Activated CD4-positive, alpha-beta T cell treated with anti-CD3 and anti-CD28 coated beads, Interleukin-2, amount 10 ng/mL, durations not matched to agents 7 days and 5 days (primary cell): ENCODE measurements at regions of chr3 and their contacts with region 1.

Region 1: GRCh38 chr3:137013955-137014688 is 56.3 kb downstream of the IL20RB start:
- DNase-seq: peak; percentile 85
- H3K4me3 Mint-ChIP-seq: peak overlapping the region; percentile 52
- H3K27ac Mint-ChIP-seq: peak overlapping the region; percentile 63
- H3K4me1 Mint-ChIP-seq: peaks cover 14% of the 10 kb centered on the region
- H3K27me3 Mint-ChIP-seq: no peaks in the 10 kb centered on the region

Region 2: GRCh38 chr3:136396916-136397315 is 617.2 kb before region 1 on chr3:
- CTCF ChIA-PET with region 1: interaction called, 12 read pairs
- POLR2A ChIA-PET with region 1: no interaction called
- DNase-seq: no peak
- H3K4me3 Mint-ChIP-seq: no peak overlapping the region
- H3K27ac Mint-ChIP-seq: no peak overlapping the region
- H3K4me1 Mint-ChIP-seq: no peaks in the 10 kb centered on the region
- H3K27me3 Mint-ChIP-seq: no peaks in the 10 kb centered on the region

Region 3: GRCh38 chr3:136861890-136862616 is 152.1 kb before region 1 on chr3 and contains the start of gene NCK1:
- CTCF ChIA-PET with region 1: interaction called, 11 read pairs
- POLR2A ChIA-PET with region 1: interaction called, 4 read pairs
- DNase-seq: peak; percentile 99
- H3K4me3 Mint-ChIP-seq: peak within 1 kb of the TSS; percentile 98
- H3K27ac Mint-ChIP-seq: peak within 1 kb of the TSS; percentile 99
- H3K4me1 Mint-ChIP-seq: peaks cover 51% of the 10 kb centered on the region
- H3K27me3 Mint-ChIP-seq: no peaks in the 10 kb centered on the region
- total RNA-seq, gene NCK1: 39.2 to 48.5 TPM